Tibial artery (tissue), 4 donors: ENCODE measurements at regions of chr2 and their contacts with region 1.

Region 1: DNA sequence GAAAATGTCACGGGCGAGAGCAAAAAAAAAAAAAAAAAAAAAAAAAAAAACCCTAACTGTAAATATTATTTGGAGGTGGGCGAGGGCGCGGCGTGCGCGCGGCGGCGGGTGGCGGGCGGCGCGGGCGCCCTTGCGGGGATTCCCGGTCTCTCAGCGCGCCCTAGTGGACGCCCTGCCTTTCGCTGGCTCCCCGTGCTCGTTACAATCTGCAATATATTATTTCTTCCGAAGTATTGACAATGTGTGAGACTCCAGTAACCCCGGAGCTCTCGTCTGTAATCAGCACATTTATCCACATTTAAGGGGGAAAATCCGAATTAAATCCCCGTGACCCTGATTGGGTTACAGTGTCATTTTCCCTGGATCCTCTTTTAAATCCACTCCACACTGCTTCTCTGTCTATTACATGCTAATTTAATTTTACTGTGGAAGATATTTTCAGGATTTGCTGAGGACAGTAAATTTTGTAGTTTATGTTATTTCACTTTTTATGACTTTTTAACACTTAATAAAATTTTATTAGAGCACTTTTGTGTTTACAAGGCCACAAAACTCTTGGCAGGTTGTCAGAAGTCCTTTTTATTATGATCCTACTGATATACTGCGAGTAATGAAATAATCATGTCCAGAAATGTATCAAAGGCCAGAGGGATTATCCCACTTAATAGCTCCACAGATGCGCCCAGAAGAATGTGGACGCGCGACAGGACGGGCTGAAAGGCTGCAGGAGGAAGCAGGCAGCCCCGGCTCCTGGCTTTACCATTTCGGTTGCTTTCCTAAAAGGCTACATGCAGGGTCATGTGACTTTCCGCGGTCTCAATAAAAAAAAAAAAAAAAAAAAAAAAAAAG is 369.1 kb downstream of the MTX2 start:
- DNase-seq: peak; percentile 40 to 75
- H3K4me3 ChIP-seq: peak overlapping the region; percentile 52 to 67
- H3K27ac ChIP-seq: peak overlapping the region in 1 of 2 donors; percentile 33
- H3K4me1 ChIP-seq: peaks cover 0 to 7% (median 5%) of the 10 kb centered on the region in 4 donors
- H3K27me3 ChIP-seq: peaks cover 0 to 51% of the 10 kb centered on the region in 2 donors
- CTCF ChIP-seq: peak; percentile 71 to 74

Region 2: DNA sequence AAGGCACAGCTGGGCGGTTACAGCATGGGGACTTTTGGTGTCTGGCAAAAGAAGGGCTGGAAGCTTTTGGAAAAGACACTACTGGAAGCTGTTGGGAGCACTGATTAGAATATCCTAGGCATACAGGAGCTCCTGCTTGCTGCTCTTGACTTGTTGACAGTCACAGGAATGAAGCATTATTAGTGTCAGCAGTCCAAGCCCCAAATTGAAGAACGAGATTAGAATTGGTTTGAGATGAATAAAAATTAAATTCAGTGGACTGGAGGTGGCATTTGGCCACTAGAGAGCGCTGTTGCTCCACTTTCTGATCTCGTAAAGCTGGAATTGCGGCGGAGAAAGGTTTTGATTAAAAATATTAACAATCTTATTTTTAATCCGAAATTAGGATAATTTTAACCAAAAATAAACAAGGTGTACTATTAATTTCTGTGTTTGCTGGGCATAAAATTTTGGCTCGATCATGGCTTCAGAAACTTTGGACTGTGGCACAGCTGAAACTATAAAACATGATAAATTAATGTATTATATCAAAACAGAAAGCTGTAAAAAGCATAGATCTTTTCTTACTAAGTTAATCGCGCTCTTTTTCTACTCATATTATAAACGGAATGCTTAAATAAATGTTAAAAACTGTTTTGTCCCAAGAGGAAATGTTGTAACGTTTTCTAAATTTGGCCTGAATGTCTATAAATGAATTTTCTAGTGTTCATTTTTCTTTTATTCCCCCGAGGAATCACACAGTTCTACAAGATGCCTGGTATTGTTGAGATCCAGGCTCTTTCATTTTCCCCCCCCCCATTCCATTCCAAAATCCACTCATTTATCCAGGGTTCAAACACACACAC is 511.2 kb before region 1 on chr2:
- intact Hi-C with region 1: loop called (anchors 5 kb)
- DNase-seq: peak in 1 of 2 donors; percentile 63
- H3K4me3 ChIP-seq: no peak overlapping the region
- H3K27ac ChIP-seq: no peak overlapping the region
- H3K4me1 ChIP-seq: peaks cover 0 to 48% (median 34%) of the 10 kb centered on the region in 4 donors
- H3K27me3 ChIP-seq: peaks cover 0 to 74% of the 10 kb centered on the region in 2 donors
- CTCF ChIP-seq: peak; percentile 79 to 87

Region 3: DNA sequence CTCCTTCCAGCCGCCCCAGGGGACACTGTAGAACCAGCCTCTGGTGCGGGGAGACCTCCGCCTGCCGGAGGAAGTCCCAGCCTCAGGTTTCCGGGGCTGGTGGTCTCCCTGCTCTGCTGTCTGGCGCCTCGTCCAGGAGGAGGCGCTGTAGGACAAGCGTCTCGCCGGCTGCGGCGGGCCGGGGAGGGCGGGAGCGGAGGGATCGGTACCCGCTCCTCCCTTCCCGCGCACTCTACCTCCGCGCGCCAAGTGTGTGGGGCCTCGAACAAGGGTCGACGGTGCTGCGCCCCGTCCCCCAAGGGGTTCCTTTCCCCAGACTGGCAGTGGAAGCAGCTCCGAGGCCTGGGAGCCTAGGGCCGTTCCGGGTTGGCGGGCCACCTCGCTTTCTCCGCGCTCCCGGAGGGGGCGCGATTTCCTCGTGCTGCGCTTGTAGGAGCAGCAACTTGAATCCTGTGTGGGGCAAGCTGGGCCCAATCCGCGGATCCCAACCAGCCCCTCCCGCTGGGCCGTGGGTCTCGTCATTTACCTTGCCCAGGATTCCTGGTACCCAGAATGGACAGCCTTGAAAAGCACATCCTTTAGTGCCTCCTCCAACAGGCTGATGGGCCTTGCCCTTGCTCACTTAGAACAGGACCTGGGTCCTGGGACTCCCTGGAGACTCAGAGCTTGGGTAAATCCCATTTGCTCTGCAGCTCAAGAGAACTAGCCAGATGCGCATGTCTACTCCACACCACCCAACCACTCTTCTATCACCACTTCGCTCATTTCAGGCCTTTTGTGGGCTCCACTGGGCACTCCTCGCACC is 497.7 kb before region 1 on chr2:
- intact Hi-C with region 1: loop called (anchors 5 kb)
- DNase-seq: peak; percentile 51 to 85
- H3K4me3 ChIP-seq: peak overlapping the region; percentile 48 to 57
- H3K27ac ChIP-seq: peak overlapping the region; percentile 57 to 60
- H3K4me1 ChIP-seq: peaks cover 0 to 34% (median 19%) of the 10 kb centered on the region in 4 donors
- H3K27me3 ChIP-seq: peaks cover 0 to 19% of the 10 kb centered on the region in 2 donors
- CTCF ChIP-seq: peak; percentile 94 to 95

Region 4: DNA sequence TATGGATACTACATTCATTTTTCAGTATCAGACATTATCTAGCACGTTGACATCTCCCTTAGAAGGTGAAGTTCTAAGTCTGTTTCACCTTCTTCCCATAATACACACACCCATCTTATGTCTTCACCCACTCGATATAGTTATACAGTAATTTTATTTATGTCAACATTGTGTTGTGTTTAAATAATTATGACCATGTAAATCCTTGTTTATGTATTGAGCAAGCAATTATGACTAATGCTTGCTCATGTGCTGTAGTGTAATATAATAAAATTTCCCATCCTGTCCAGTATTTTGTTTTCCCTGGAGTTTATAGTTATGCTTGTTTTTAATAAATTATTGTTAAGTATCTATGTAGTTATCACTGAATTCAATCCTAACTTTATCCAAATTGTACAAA is 206.0 kb before region 1 on chr2:
- intact Hi-C with region 1: no loop called
- DNase-seq: no peak
- H3K4me3 ChIP-seq: no peak overlapping the region
- H3K27ac ChIP-seq: no peak overlapping the region
- H3K4me1 ChIP-seq: no peaks in the 10 kb centered on the region
- H3K27me3 ChIP-seq: no peaks in the 10 kb centered on the region
- CTCF ChIP-seq: no peak

Region 5: GRCh38 chr2:176454893-176455811 is 183.2 kb before region 1 on chr2:
- intact Hi-C with region 1: loop called (anchors 5 kb)
- DNase-seq: peak; percentile 81 to 83
- H3K4me3 ChIP-seq: no peak overlapping the region
- H3K27ac ChIP-seq: no peak overlapping the region
- H3K4me1 ChIP-seq: peaks cover 0 to 7% (median 0%) of the 10 kb centered on the region in 4 donors
- H3K27me3 ChIP-seq: no peaks in the 10 kb centered on the region
- CTCF ChIP-seq: peak; percentile 84 to 90

Region 6: GRCh38 chr2:176562359-176563043 is 75.9 kb before region 1 on chr2:
- intact Hi-C with region 1: loop called (anchors 5 kb)
- DNase-seq: no peak
- H3K4me3 ChIP-seq: no peak overlapping the region
- H3K27ac ChIP-seq: no peak overlapping the region
- H3K4me1 ChIP-seq: peaks cover 0 to 2% (median 0%) of the 10 kb centered on the region in 4 donors
- H3K27me3 ChIP-seq: peaks cover 0 to 3% of the 10 kb centered on the region in 2 donors
- CTCF ChIP-seq: no peak